ENCODE measurements at regions of chr12 and their contacts with region 1.

Region 1: GRCh38 chr12:116703214-116703795 is 34.6 kb downstream of the SPRING1 start:
- DNase-seq: peak in 4 of 5 donors; percentile 51 to 57 (median 53)
- H3K4me3 ChIP-seq: no peak overlapping the region
- H3K4me3 Mint-ChIP-seq: no peak overlapping the region
- H3K27ac ChIP-seq: no peak overlapping the region
- H3K27ac Mint-ChIP-seq: peak overlapping the region in 1 of 7 donors; percentile 83
- H3K4me1 ChIP-seq: peaks cover 3% of the 10 kb centered on the region
- H3K4me1 Mint-ChIP-seq: peaks cover 0 to 5% (median 3%) of the 10 kb centered on the region in 4 donors
- H3K27me3 ChIP-seq: no peaks in the 10 kb centered on the region
- H3K27me3 Mint-ChIP-seq: peaks cover 2 to 5% of the 10 kb centered on the region in 2 donors

Region 2: DNA sequence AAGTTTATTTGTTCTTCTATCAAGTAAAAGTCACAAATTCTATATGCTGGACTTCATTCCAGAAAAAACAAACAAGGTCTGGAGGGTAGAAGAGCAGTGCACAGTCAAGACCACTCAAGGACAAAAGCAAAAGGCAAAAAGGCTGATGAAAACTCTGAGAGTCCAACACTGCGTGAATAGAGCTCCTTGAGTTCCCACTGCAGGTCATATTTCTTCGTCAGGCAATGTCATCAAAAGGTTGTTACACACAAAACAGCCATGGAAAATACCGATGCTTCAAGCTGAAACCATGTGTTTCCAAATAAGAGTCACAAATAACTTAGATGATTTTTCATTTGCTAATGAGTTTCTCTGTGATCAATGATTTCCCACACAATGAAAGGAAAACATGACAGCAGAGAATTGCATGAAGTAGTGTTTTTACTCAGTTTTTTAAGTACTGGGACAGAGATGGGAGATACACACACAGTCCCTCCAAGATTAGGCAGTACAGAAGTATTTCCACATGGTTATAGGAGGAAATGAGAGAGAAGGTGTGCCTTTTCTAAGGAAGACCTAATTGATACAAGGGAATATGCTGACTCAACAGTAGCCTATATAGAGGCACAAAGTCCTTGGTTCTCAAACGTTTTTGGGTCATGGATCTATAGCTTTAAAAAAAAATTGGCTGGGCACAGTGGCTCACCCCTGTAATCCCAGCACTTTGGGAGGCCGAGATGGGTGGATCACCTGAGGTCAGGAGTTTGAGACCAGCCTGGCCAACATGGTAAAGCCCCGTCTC is 603.5 kb before region 1 on chr12:
- CTCF ChIA-PET with region 1: no interaction called
- POLR2A ChIA-PET with region 1: no interaction called
- intact Hi-C with region 1: no loop called
- DNase-seq: no peak
- H3K4me3 ChIP-seq: no peak overlapping the region
- H3K4me3 Mint-ChIP-seq: no peak overlapping the region
- H3K27ac ChIP-seq: no peak overlapping the region
- H3K27ac Mint-ChIP-seq: peak overlapping the region in 2 of 7 donors; percentile 27 to 44
- H3K4me1 ChIP-seq: peaks cover 5% of the 10 kb centered on the region
- H3K4me1 Mint-ChIP-seq: peaks cover 19 to 33% (median 26%) of the 10 kb centered on the region in 4 donors
- H3K27me3 ChIP-seq: no peaks in the 10 kb centered on the region
- H3K27me3 Mint-ChIP-seq: no peaks in the 10 kb centered on the region

Region 3: DNA sequence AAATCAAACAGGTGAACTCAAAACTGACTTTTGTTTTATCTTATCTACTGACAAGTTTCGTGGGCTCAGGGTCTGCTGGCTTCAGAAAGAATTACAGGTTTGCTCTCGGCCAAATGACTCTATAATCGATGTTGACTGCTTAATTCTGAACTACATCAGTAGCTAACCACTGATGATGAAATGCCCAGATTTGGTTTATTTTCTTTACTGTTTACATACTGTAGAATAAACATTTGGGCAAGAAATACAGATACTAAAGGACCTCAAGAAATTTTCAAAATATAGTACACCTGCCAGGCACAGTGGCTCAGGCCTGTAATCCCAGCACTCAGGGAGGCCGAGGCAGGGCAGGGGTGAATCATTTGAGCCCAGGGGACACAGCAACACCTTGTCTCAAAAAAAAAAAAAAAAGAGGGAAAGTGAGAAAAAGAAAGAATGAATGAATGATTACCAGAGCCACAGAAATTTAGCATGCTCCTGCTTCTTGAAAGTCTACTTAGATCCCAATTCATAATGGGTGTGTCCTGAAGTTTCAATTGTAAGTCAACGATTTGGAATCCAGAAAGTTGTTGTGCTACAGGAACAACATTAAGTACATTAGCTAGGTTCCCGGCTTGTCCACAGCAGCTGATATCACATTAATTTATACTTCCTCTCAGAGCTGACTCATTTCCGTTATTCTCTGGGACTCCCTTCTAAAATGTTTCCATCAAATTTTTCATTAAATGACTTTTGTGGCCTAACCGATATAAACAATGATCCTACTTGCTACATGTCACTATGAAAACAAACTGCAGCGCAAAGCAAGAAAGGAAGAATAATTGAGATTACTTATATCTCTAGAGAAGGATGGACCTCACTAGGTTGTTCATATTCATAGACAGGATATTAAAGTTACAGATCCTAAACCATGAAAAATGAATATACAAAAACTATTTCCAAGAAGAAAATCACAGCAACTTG is 560.1 kb before region 1 on chr12:
- CTCF ChIA-PET with region 1: no interaction called
- POLR2A ChIA-PET with region 1: no interaction called
- intact Hi-C with region 1: loop called (anchors 10 kb)
- DNase-seq: no peak
- H3K4me3 ChIP-seq: no peak overlapping the region
- H3K4me3 Mint-ChIP-seq: peak overlapping the region in 7 of 8 donors; percentile 12 to 68 (median 61)
- H3K27ac ChIP-seq: no peak overlapping the region
- H3K27ac Mint-ChIP-seq: peak overlapping the region in 4 of 7 donors; percentile 3 to 43 (median 14)
- H3K4me1 ChIP-seq: peaks cover 34% of the 10 kb centered on the region
- H3K4me1 Mint-ChIP-seq: peaks cover 40 to 56% (median 48%) of the 10 kb centered on the region in 4 donors
- H3K27me3 ChIP-seq: no peaks in the 10 kb centered on the region
- H3K27me3 Mint-ChIP-seq: no peaks in the 10 kb centered on the region

Region 4: GRCh38 chr12:116924558-116925453 is 221.5 kb after region 1 on chr12:
- CTCF ChIA-PET with region 1: no interaction called
- POLR2A ChIA-PET with region 1: no interaction called
- intact Hi-C with region 1: no loop called
- DNase-seq: peak; percentile 83 to 90 (median 85)
- H3K4me3 ChIP-seq: no peak overlapping the region
- H3K4me3 Mint-ChIP-seq: peak overlapping the region in 7 of 8 donors; percentile 45 to 86 (median 77)
- H3K27ac ChIP-seq: no peak overlapping the region
- H3K27ac Mint-ChIP-seq: peak overlapping the region; percentile 78 to 93 (median 86)
- H3K4me1 ChIP-seq: peaks cover 69% of the 10 kb centered on the region
- H3K4me1 Mint-ChIP-seq: peaks cover 48 to 75% (median 62%) of the 10 kb centered on the region in 4 donors
- H3K27me3 ChIP-seq: no peaks in the 10 kb centered on the region
- H3K27me3 Mint-ChIP-seq: no peaks in the 10 kb centered on the region

Region 5: DNA sequence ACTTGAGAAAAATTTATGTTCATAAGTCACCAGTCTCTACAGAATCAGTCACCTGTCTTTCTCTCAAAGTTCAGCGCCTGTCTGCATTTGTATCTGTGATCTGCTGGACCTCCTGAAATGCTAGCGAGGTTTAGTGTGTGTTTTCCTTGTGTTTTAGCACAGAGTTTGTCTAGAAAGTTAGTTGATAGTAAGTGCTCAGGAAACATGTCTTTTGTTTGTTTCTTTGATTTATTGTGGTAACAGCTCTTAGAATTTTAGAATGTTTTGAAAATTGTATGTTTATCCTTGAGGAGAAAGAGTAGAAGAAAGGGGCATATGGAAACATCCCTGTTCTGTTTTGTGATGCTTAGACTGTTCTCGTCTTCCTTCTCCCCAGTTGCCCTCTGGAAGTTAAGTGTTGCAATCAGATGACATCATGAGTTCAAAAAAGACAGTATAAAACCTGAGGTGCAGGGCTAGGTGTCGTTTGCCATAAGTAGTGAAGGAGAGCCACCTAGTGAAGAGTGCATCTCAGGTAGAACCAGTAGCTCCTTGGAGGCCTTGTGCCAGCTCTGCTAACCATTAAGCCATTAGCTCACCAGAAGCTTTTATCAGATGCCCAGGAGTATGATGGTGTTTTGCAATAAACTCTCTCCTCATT is 252.2 kb after region 1 on chr12:
- CTCF ChIA-PET with region 1: interaction called, 18 read pairs
- POLR2A ChIA-PET with region 1: no interaction called
- intact Hi-C with region 1: no loop called
- DNase-seq: peak; percentile 35 to 45 (median 36)
- H3K4me3 ChIP-seq: no peak overlapping the region
- H3K4me3 Mint-ChIP-seq: no peak overlapping the region
- H3K27ac ChIP-seq: no peak overlapping the region
- H3K27ac Mint-ChIP-seq: no peak overlapping the region
- H3K4me1 ChIP-seq: peaks cover 3% of the 10 kb centered on the region
- H3K4me1 Mint-ChIP-seq: peaks cover 3 to 10% (median 7%) of the 10 kb centered on the region in 4 donors
- H3K27me3 ChIP-seq: no peaks in the 10 kb centered on the region
- H3K27me3 Mint-ChIP-seq: no peaks in the 10 kb centered on the region

Region 6: DNA sequence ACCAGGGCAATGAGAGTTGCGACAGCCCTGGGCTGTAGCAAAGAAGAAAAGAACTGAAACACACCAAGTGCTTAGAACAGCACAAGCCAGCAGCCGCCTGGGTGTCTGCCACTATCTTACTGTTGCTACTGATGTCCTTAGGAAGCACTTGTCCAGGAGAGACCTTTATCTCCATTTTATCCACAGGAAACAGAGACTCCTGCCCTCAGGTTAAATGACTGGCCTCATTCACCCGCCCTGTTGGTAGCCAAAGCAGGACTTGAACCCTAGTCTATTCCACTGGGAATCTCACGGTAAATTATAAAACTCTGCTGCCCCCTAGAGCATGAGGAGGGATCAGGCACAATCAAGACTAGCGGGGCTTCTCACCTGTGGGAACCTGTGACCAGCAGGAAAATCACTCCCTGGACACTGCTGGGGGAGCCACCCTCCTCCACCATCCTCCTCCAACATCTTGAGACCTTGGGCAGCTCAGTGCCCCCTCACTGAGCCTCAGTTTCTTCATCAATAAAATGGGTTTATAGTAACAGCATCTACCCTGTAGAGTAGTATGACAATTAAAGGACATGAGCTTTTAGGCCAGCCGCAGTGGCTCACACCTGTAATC is 416.4 kb after region 1 on chr12:
- CTCF ChIA-PET with region 1: interaction called, 26 read pairs
- POLR2A ChIA-PET with region 1: no interaction called
- intact Hi-C with region 1: no loop called
- DNase-seq: peak in 4 of 5 donors; percentile 24 to 46 (median 29)
- H3K4me3 ChIP-seq: no peak overlapping the region
- H3K4me3 Mint-ChIP-seq: no peak overlapping the region
- H3K27ac ChIP-seq: no peak overlapping the region
- H3K27ac Mint-ChIP-seq: peak overlapping the region in 1 of 7 donors; percentile 17
- H3K4me1 ChIP-seq: no peaks in the 10 kb centered on the region
- H3K4me1 Mint-ChIP-seq: no peaks in the 10 kb centered on the region
- H3K27me3 ChIP-seq: no peaks in the 10 kb centered on the region
- H3K27me3 Mint-ChIP-seq: no peaks in the 10 kb centered on the region

Region 7: GRCh38 chr12:117836999-117837736 is 1133.9 kb after region 1 on chr12:
- CTCF ChIA-PET with region 1: interaction called, 5 read pairs
- POLR2A ChIA-PET with region 1: no interaction called
- intact Hi-C with region 1: loop called (anchors 10 kb)
- DNase-seq: peak; percentile 48 to 63 (median 58)
- H3K4me3 ChIP-seq: no peak overlapping the region
- H3K4me3 Mint-ChIP-seq: peak overlapping the region in 7 of 8 donors; percentile 22 to 71 (median 59)
- H3K27ac ChIP-seq: no peak overlapping the region
- H3K27ac Mint-ChIP-seq: peak overlapping the region in 1 of 7 donors; percentile 37
- H3K4me1 ChIP-seq: no peaks in the 10 kb centered on the region
- H3K4me1 Mint-ChIP-seq: peaks cover 3 to 11% (median 6%) of the 10 kb centered on the region in 4 donors
- H3K27me3 ChIP-seq: no peaks in the 10 kb centered on the region
- H3K27me3 Mint-ChIP-seq: peaks cover 6 to 7% of the 10 kb centered on the region in 2 donors

Measured in CD4-positive, alpha-beta memory T cell (primary cell).